Posterior vena cava (tissue), 2 donors: ENCODE measurements at regions of chr15 and their contacts with region 1.

Region 1: GRCh38 chr15:89243691-89244471 is at the start of gene FANCI:
- DNase-seq: peak; percentile 99
- total RNA-seq, gene FANCI: 6.1 to 7.0 TPM

Region 2: GRCh38 chr15:89278307-89278706 is 34.4 kb after region 1 on chr15:
- intact Hi-C with region 1: loop called in 1 of 2 experiments (anchors 1 kb)
- DNase-seq: no peak

Region 3: DNA sequence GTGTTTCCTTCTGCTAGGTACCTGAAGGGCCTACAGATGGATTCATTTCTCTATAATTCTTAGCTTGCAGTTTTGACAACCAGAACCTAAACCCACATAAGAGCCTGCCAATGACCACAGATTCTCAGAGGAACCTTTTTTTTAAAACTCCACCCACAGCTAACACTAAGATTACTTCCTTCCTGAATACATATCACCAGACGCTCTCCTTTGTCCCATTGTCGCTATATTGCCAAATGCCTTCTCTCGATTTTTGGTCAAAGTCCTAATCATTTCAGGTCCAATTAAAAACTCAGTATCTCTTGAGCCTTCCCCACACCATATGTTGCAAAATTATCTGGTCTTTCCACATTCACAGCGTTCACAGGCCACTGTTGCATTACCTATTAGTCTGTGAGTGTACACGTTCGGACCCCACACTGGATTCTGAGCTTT is 769.6 kb after region 1 on chr15:
- intact Hi-C with region 1: no loop called
- DNase-seq: no peak